CD4-positive, alpha-beta T cell (primary cell): ENCODE measurements at regions of chr1 and their contacts with region 1.

Region 1: DNA sequence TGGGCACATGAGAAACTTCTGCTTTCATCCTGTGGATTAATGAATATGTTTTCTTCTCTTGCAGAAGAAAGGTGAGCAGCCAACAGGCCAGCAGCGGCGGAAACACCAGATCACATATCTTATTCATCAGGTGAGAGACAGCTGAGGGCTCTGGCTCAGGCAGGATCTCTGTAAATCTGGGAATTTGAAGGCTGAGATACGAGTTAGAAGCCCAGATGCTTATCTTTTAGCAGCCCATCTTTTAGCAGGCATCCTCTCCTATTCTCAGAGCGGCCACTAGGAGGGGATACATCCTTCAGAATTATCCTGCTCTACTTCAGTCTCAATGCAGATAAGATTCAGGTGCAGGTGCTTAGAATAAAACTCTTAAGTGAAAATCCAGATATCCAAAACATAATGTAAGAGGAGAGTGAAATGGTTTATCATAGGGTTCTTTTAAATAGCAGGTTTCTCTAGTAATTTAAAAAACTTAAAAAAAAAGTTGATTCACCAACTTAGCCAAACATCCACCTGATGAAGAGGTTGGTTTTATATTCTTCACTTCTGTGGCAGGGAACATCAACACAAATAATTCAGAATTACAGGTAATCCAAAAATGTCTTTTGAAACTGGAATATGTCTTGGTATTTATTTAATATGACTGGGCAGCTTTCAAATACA is 19.3 kb downstream of the SH2D2A start:
- DNase-seq: peak in 13 of 14 experiments; percentile 26 to 84 (median 58)
- ATAC-seq: peak; percentile 92
- H3K4me3 ChIP-seq: no peak overlapping the region
- H3K4me3 Mint-ChIP-seq: no peak overlapping the region
- H3K27ac ChIP-seq: no peak overlapping the region
- H3K27ac Mint-ChIP-seq: peak overlapping the region; percentile 5
- H3K4me1 ChIP-seq: peaks cover 21% of the 10 kb centered on the region
- H3K4me1 Mint-ChIP-seq: peaks cover 8% of the 10 kb centered on the region
- H3K27me3 ChIP-seq: no peaks in the 10 kb centered on the region
- H3K27me3 Mint-ChIP-seq: no peaks in the 10 kb centered on the region
- CTCF ChIP-seq: peak; percentile 79

Region 2: GRCh38 chr1:156838981-156839410 is 41.7 kb after region 1 on chr1:
- CTCF ChIA-PET with region 1: interaction called, 14 read pairs
- POLR2A ChIA-PET with region 1: no interaction called
- intact Hi-C with region 1: no loop called
- DNase-seq: peak in 11 of 14 experiments; percentile 34 to 74 (median 42)
- ATAC-seq: peak; percentile 84
- H3K4me3 ChIP-seq: no peak overlapping the region
- H3K4me3 Mint-ChIP-seq: no peak overlapping the region
- H3K27ac ChIP-seq: no peak overlapping the region
- H3K27ac Mint-ChIP-seq: no peak overlapping the region
- H3K4me1 ChIP-seq: peaks cover 24% of the 10 kb centered on the region
- H3K4me1 Mint-ChIP-seq: peaks cover 12% of the 10 kb centered on the region
- H3K27me3 ChIP-seq: peaks cover 27 to 37% of the 10 kb centered on the region in 2 experiments
- H3K27me3 Mint-ChIP-seq: peaks cover 60% of the 10 kb centered on the region
- CTCF ChIP-seq: peak; percentile 85

Region 3: GRCh38 chr1:156927215-156928042 is 130.1 kb after region 1 on chr1:
- CTCF ChIA-PET with region 1: interaction called, 4 read pairs
- POLR2A ChIA-PET with region 1: no interaction called
- intact Hi-C with region 1: loop called (anchors 1 to 5 kb)
- DNase-seq: peak; percentile 43 to 78 (median 58)
- ATAC-seq: peak; percentile 84
- H3K4me3 ChIP-seq: peak overlapping the region; percentile 9
- H3K4me3 Mint-ChIP-seq: no peak overlapping the region
- H3K27ac ChIP-seq: no peak overlapping the region
- H3K27ac Mint-ChIP-seq: no peak overlapping the region
- H3K4me1 ChIP-seq: peaks cover 24% of the 10 kb centered on the region
- H3K4me1 Mint-ChIP-seq: peaks cover 37% of the 10 kb centered on the region
- H3K27me3 ChIP-seq: peaks cover 57 to 81% of the 10 kb centered on the region in 2 experiments
- H3K27me3 Mint-ChIP-seq: peaks cover 94% of the 10 kb centered on the region
- CTCF ChIP-seq: peak; percentile 58